Activated T-helper 2 cell treated with anti-CD3 and anti-CD28 coated beads, Interferon-gamma antibody, Interleukin-2, Interleukin-4, amounts not matched to agents 10 μg/mL and 5 μg/mL and 100 μg/mL, durations not matched to agents 14 hours and 24 hours and 36 hours (primary cell): ENCODE measurements at regions of chr1 and their contacts with region 1.

Region 1: DNA sequence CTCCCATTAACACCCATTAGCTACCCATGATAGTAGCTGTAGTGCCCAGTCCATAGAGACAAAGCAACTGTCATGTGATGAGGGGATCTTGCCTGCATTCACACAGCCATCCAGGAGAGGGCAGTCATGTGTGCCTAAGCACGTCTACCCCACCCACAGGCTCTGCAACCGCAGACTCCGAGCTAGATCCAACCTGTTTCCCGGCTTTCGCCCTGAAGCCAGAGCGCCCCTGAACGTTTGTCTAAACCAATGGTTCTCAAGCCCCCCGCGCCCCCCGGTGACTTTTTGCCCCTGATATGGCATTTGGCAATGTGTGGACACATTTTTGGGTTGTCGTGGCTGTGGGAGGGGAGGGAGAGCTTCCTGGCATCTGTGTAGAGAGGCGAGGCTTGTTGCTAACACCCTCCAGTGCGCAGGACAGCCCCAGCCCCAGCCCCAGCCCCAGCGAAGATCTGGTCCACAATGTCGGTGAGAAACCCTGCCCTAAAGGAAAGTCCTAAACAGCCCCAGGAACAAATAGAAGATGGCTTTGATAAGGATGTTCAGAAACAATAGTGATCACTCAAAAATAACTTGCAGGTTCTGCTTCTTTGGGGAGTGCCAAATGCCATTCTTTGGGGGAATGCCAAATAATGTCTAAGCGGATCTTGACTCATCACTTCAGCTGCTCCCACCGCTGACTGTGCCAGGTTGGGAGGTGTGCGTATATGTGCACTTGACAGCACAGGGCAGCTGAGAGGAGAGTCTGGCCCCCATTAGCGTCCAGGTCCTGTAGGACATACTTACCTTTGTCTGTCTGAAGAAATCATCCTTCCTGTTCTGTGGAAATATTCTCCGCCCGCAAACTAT is 34.5 kb downstream of the SLC44A3 start:
- DNase-seq: peak; percentile 69
- H3K4me3 Mint-ChIP-seq: no peak overlapping the region
- H3K27ac Mint-ChIP-seq: no peak overlapping the region
- H3K4me1 Mint-ChIP-seq: no peaks in the 10 kb centered on the region
- H3K27me3 Mint-ChIP-seq: peaks cover 2% of the 10 kb centered on the region

Region 2: GRCh38 chr1:94873522-94874351 is 19.1 kb after region 1 on chr1:
- intact Hi-C with region 1: no loop called
- DNase-seq: no peak
- H3K4me3 Mint-ChIP-seq: no peak overlapping the region
- H3K27ac Mint-ChIP-seq: no peak overlapping the region
- H3K4me1 Mint-ChIP-seq: peaks cover 6% of the 10 kb centered on the region
- H3K27me3 Mint-ChIP-seq: peaks cover 4% of the 10 kb centered on the region

Region 3: DNA sequence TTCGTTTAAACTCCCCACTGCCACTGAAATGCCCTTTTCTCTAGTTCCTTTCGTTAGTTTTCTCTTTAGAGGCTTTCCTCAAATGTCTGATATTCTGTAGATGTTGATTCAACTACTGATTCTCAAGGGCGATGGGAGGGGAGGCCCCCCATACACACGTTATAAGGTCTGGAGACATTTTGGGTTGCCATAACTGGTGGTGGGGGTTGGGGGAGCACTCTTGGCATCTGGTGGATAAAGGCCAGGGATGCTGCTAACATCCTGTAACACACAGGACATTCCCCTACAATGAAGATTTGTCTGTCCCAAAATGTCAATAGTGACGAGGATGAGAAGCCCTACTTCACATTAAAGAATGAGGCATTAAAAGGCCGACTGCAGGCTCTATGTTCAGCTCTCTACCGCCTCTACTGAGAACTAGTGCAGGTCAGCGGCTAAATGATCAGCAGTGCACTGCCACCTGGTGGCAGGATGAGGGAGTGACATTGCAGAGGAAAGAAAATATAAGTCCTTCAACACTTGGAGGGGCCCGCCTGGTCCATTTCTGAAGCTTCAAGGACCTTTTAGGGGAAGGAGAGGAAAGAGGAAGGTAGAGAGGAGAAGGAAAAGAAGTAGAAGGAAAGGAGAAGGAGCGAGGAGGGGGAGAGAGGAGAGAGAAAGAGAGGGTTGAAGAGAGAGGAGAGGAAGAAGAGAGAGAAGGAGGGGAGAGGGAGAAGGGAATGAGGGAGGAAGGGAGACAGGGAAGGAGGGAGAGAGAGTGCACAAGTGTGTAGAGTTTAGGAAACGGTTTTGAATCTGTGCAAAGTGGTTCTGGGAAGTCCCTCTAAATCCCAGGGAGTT is 188.7 kb after region 1 on chr1:
- intact Hi-C with region 1: loop called (anchors 1 kb)
- DNase-seq: peak; percentile 66
- H3K4me3 Mint-ChIP-seq: no peak overlapping the region
- H3K27ac Mint-ChIP-seq: no peak overlapping the region
- H3K4me1 Mint-ChIP-seq: no peaks in the 10 kb centered on the region
- H3K27me3 Mint-ChIP-seq: no peaks in the 10 kb centered on the region

Region 4: GRCh38 chr1:95111014-95111413 is 256.3 kb after region 1 on chr1:
- intact Hi-C with region 1: no loop called
- DNase-seq: no peak
- H3K4me3 Mint-ChIP-seq: no peak overlapping the region
- H3K27ac Mint-ChIP-seq: no peak overlapping the region
- H3K4me1 Mint-ChIP-seq: no peaks in the 10 kb centered on the region
- H3K27me3 Mint-ChIP-seq: peaks cover 28% of the 10 kb centered on the region

Region 5: GRCh38 chr1:95233737-95234500 is 379.2 kb after region 1 on chr1 and contains the start of gene RWDD3:
- intact Hi-C with region 1: loop called (anchors 1 kb)
- DNase-seq: peak; percentile 91
- H3K4me3 Mint-ChIP-seq: peak within 1 kb of the TSS; percentile 95
- H3K27ac Mint-ChIP-seq: peak within 1 kb of the TSS; percentile 89
- H3K4me1 Mint-ChIP-seq: peaks cover 30% of the 10 kb centered on the region
- H3K27me3 Mint-ChIP-seq: peaks cover 27% of the 10 kb centered on the region
- total RNA-seq, gene RWDD3: 11.7 and 15.5 TPM in 2 replicates